Caco-2 (cell line): ENCODE measurements at regions of chr20 and their contacts with region 1.

Region 1: GRCh38 chr20:18507218-18508021 is at the start of gene SEC23B:
- DNase-seq: peak; percentile 98 to 99
- H3K4me3 ChIP-seq: peak within 1 kb of the TSS; percentile 48
- H3K4me3 Mint-ChIP-seq: peak within 1 kb of the TSS; percentile 99
- H3K27ac Mint-ChIP-seq: peak within 1 kb of the TSS; percentile 100
- H3K4me1 ChIP-seq: peaks cover 9% of the 10 kb centered on the region; the same call in 1 of the 2 replicates
- H3K4me1 Mint-ChIP-seq: peaks cover 7% of the 10 kb centered on the region
- H3K27me3 ChIP-seq: no peaks in the 10 kb centered on the region
- H3K27me3 Mint-ChIP-seq: no peaks in the 10 kb centered on the region
- CTCF ChIP-seq: no peak
- total RNA-seq, gene SEC23B: 84.1 and 85.3 TPM in 2 replicates

Region 2: GRCh38 chr20:18287915-18288748 is 219.3 kb before region 1 on chr20 and contains the start of gene ZNF133:
- CTCF ChIA-PET with region 1: no interaction called
- POLR2A ChIA-PET with region 1: interaction called, 18 read pairs
- intact Hi-C with region 1: no loop called
- DNase-seq: peak; percentile 98 to 99
- H3K4me3 ChIP-seq: peak within 1 kb of the TSS; percentile 68
- H3K4me3 Mint-ChIP-seq: peak within 1 kb of the TSS; percentile 96
- H3K27ac Mint-ChIP-seq: peak within 1 kb of the TSS; percentile 96
- H3K4me1 ChIP-seq: 0 out of 2 replicates have a peak, but pooled peaks cover 13% of the 10 kb centered on the region
- H3K4me1 Mint-ChIP-seq: peaks cover 17% of the 10 kb centered on the region
- H3K27me3 ChIP-seq: no peaks in the 10 kb centered on the region
- H3K27me3 Mint-ChIP-seq: no peaks in the 10 kb centered on the region
- CTCF ChIP-seq: peak in 1 of 2 experiments; percentile 46
- total RNA-seq, gene ZNF133: 14.8 and 17.4 TPM in 2 replicates

Region 3: GRCh38 chr20:18466894-18467730 is 40.3 kb before region 1 on chr20 and contains the starts of genes DZANK1 and POLR3F:
- CTCF ChIA-PET with region 1: interaction called, 4 read pairs
- POLR2A ChIA-PET with region 1: interaction called, 48 read pairs
- intact Hi-C with region 1: loop called (anchors 1 kb)
- DNase-seq: peak; percentile 98
- H3K4me3 ChIP-seq: peak within 1 kb of the TSS; percentile 82
- H3K4me3 Mint-ChIP-seq: peak within 1 kb of the TSS; percentile 98
- H3K27ac Mint-ChIP-seq: peak within 1 kb of the TSS; percentile 100
- H3K4me1 ChIP-seq: peaks cover 6% of the 10 kb centered on the region; the same call in 1 of the 2 replicates
- H3K4me1 Mint-ChIP-seq: peaks cover 17% of the 10 kb centered on the region
- H3K27me3 ChIP-seq: no peaks in the 10 kb centered on the region
- H3K27me3 Mint-ChIP-seq: no peaks in the 10 kb centered on the region
- CTCF ChIP-seq: no peak
- total RNA-seq, gene DZANK1: 8.6 and 9.6 TPM in 2 replicates
- total RNA-seq, gene POLR3F: 13.7 and 15.7 TPM in 2 replicates

Region 4: GRCh38 chr20:18488301-18488700 is 19.1 kb before region 1 on chr20:
- CTCF ChIA-PET with region 1: no interaction called
- POLR2A ChIA-PET with region 1: interaction called, 10 read pairs
- intact Hi-C with region 1: no loop called
- DNase-seq: no peak
- H3K4me3 ChIP-seq: no peak overlapping the region
- H3K4me3 Mint-ChIP-seq: no peak overlapping the region
- H3K27ac Mint-ChIP-seq: no peak overlapping the region
- H3K4me1 ChIP-seq: no peaks in the 10 kb centered on the region
- H3K4me1 Mint-ChIP-seq: no peaks in the 10 kb centered on the region
- H3K27me3 ChIP-seq: no peaks in the 10 kb centered on the region
- H3K27me3 Mint-ChIP-seq: no peaks in the 10 kb centered on the region
- CTCF ChIP-seq: no peak

Region 5: GRCh38 chr20:18566892-18567742 is 59.7 kb after region 1 on chr20 and contains the start of gene SMIM26:
- CTCF ChIA-PET with region 1: no interaction called
- POLR2A ChIA-PET with region 1: interaction called, 12 read pairs
- intact Hi-C with region 1: loop called (anchors 5 kb)
- DNase-seq: peak; percentile 95
- H3K4me3 ChIP-seq: peak within 1 kb of the TSS; percentile 59
- H3K4me3 Mint-ChIP-seq: peak within 1 kb of the TSS; percentile 84
- H3K27ac Mint-ChIP-seq: peak within 1 kb of the TSS; percentile 74
- H3K4me1 ChIP-seq: no peaks in the 10 kb centered on the region
- H3K4me1 Mint-ChIP-seq: no peaks in the 10 kb centered on the region
- H3K27me3 ChIP-seq: no peaks in the 10 kb centered on the region
- H3K27me3 Mint-ChIP-seq: no peaks in the 10 kb centered on the region
- CTCF ChIP-seq: no peak
- total RNA-seq, gene SMIM26: 96.2 and 99.3 TPM in 2 replicates